Activated CD8-positive, alpha-beta T cell treated with anti-CD3 and anti-CD28 coated beads, Interleukin-2, amount 10 ng/mL, durations not matched to agents 7 days and 5 days (primary cell): ENCODE measurements at regions of chr4 and their contacts with region 1.

Region 1: DNA sequence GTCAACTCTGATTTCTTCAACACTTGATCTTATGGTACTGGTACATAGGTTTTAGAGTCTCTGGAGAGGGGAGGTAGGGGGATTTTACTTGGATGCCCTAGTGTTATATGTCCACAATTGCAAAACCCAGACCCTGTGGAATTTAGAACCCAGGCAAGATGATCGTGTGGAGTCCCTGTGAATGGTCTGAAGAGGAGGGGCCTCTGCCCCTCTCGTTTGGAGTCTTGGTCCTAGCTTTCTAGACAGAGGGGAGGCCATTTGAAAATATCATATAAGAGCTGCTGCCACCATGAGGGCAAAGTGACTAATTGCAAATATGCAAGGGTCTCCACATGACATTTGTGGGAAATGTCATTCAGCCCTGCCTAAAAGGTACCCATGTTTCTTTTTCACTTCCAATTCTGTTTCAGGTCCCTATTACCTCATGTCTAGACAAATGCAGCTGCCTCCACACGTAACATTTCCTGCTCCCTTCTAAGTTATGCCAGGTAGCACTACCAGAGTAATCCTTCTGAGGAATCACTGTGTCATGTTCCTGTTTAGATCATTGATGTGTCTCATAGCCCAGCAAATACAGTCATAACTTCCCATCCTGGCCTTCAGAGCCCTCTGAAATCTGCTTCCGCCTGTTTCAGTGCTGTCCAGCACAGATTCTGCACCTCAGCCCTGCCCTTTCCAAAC is 126.8 kb downstream of the KLHL8 start:
- DNase-seq: peak; percentile 59
- ATAC-seq: peak; percentile 88
- H3K4me3 Mint-ChIP-seq: no peak overlapping the region
- H3K27ac Mint-ChIP-seq: peak overlapping the region; percentile 23
- H3K4me1 Mint-ChIP-seq: peaks cover 10% of the 10 kb centered on the region
- H3K27me3 Mint-ChIP-seq: no peaks in the 10 kb centered on the region

Region 2: GRCh38 chr4:86927843-86928395 is 165.7 kb before region 1 on chr4:
- CTCF ChIA-PET with region 1: interaction called, 242 read pairs
- POLR2A ChIA-PET with region 1: no interaction called
- DNase-seq: no peak
- ATAC-seq: no peak
- H3K4me3 Mint-ChIP-seq: no peak overlapping the region
- H3K27ac Mint-ChIP-seq: no peak overlapping the region
- H3K4me1 Mint-ChIP-seq: peaks cover 3% of the 10 kb centered on the region
- H3K27me3 Mint-ChIP-seq: no peaks in the 10 kb centered on the region

Region 3: GRCh38 chr4:86934771-86935565 is 158.6 kb before region 1 on chr4 and contains the start of gene AFF1:
- CTCF ChIA-PET with region 1: interaction called, 25 read pairs
- POLR2A ChIA-PET with region 1: interaction called, 4 read pairs
- DNase-seq: peak; percentile 92
- ATAC-seq: peak; percentile 76
- H3K4me3 Mint-ChIP-seq: peak within 1 kb of the TSS; percentile 88
- H3K27ac Mint-ChIP-seq: peak within 1 kb of the TSS; percentile 92
- H3K4me1 Mint-ChIP-seq: peaks cover 47% of the 10 kb centered on the region
- H3K27me3 Mint-ChIP-seq: no peaks in the 10 kb centered on the region
- total RNA-seq, gene AFF1: 47.8 to 51.6 TPM